Activated CD8-positive, alpha-beta T cell treated with anti-CD3 and anti-CD28 coated beads for 36 hours (primary cell): ENCODE measurements at regions of chr4 and their contacts with region 1.

Region 1: GRCh38 chr4:12633053-12633651 is 851.0 kb downstream of the RAB28 start:
- DNase-seq: peak; percentile 86
- ATAC-seq: peak; percentile 77
- H3K4me3 Mint-ChIP-seq: no peak overlapping the region
- H3K27ac Mint-ChIP-seq: no peak overlapping the region
- H3K4me1 Mint-ChIP-seq: no peaks in the 10 kb centered on the region
- H3K27me3 Mint-ChIP-seq: peaks cover 11% of the 10 kb centered on the region
- CTCF ChIP-seq: peak; percentile 77

Region 2: GRCh38 chr4:11765849-11766453 is 867.2 kb before region 1 on chr4:
- CTCF ChIA-PET with region 1: interaction called, 12 read pairs
- POLR2A ChIA-PET with region 1: no interaction called
- intact Hi-C with region 1: loop called (anchors 5 kb)
- DNase-seq: peak; percentile 24
- ATAC-seq: no peak
- H3K4me3 Mint-ChIP-seq: no peak overlapping the region
- H3K27ac Mint-ChIP-seq: no peak overlapping the region
- H3K4me1 Mint-ChIP-seq: no peaks in the 10 kb centered on the region
- H3K27me3 Mint-ChIP-seq: peaks cover 2% of the 10 kb centered on the region
- CTCF ChIP-seq: peak; percentile 67

Region 3: GRCh38 chr4:12041828-12042227 is 591.3 kb before region 1 on chr4:
- CTCF ChIA-PET with region 1: interaction called, 3 read pairs
- POLR2A ChIA-PET with region 1: no interaction called
- intact Hi-C with region 1: loop called (anchors 10 kb)
- DNase-seq: no peak
- ATAC-seq: no peak
- H3K4me3 Mint-ChIP-seq: no peak overlapping the region
- H3K27ac Mint-ChIP-seq: no peak overlapping the region
- H3K4me1 Mint-ChIP-seq: no peaks in the 10 kb centered on the region
- H3K27me3 Mint-ChIP-seq: no peaks in the 10 kb centered on the region
- CTCF ChIP-seq: peak; percentile 18

Region 4: GRCh38 chr4:12519426-12519825 is 113.7 kb before region 1 on chr4:
- CTCF ChIA-PET with region 1: no interaction called
- POLR2A ChIA-PET with region 1: no interaction called
- intact Hi-C with region 1: no loop called
- DNase-seq: no peak
- ATAC-seq: no peak
- H3K4me3 Mint-ChIP-seq: no peak overlapping the region
- H3K27ac Mint-ChIP-seq: no peak overlapping the region
- H3K4me1 Mint-ChIP-seq: no peaks in the 10 kb centered on the region
- H3K27me3 Mint-ChIP-seq: no peaks in the 10 kb centered on the region
- CTCF ChIP-seq: no peak